ENCODE measurements at regions of chr4 and their contacts with region 1.

Region 1: GRCh38 chr4:37977471-37978247 is 17.5 kb downstream of the PTTG2 start:
- DNase-seq: peak; percentile 85
- H3K4me3 ChIP-seq: peak overlapping the region; percentile 96
- H3K27ac ChIP-seq: peak overlapping the region; percentile 99
- H3K4me1 ChIP-seq: peaks cover 62% of the 10 kb centered on the region
- CTCF ChIP-seq: peak; percentile 74

Region 2: GRCh38 chr4:37452952-37453280 is 524.7 kb before region 1 on chr4:
- CTCF ChIA-PET with region 1: no interaction called
- POLR2A ChIA-PET with region 1: no interaction called
- intact Hi-C with region 1: no loop called
- DNase-seq: peak; percentile 43
- H3K4me3 ChIP-seq: no peak overlapping the region
- H3K27ac ChIP-seq: no peak overlapping the region
- H3K4me1 ChIP-seq: no peaks in the 10 kb centered on the region
- CTCF ChIP-seq: peak; percentile 81

Region 3: DNA sequence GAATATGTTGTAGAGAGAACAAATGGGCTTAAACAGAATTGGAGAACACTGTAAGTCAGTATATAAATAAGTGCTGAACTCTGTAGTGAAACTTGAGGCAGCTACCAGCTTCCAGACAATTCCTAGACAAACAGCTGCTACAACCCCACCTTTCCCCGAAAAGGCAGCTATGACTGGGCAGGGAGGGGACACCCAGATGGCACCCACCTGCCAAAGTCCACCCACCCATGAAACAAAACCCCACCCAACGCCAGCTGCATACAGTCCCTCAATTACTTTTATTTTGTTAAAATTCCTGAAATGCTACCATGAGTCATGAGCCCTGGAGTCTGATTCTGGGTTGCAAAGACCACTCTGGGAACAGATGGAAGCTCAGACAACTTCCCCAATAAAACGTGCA is 315.9 kb before region 1 on chr4:
- CTCF ChIA-PET with region 1: no interaction called
- POLR2A ChIA-PET with region 1: no interaction called
- intact Hi-C with region 1: no loop called
- DNase-seq: no peak
- H3K4me3 ChIP-seq: no peak overlapping the region
- H3K27ac ChIP-seq: no peak overlapping the region
- H3K4me1 ChIP-seq: peaks cover 6% of the 10 kb centered on the region
- CTCF ChIP-seq: no peak

Region 4: GRCh38 chr4:37675587-37676290 is 301.9 kb before region 1 on chr4:
- CTCF ChIA-PET with region 1: no interaction called
- POLR2A ChIA-PET with region 1: no interaction called
- intact Hi-C with region 1: loop called (anchors 2 kb)
- DNase-seq: peak; percentile 95
- H3K4me3 ChIP-seq: peak overlapping the region; percentile 53
- H3K27ac ChIP-seq: peak overlapping the region; percentile 94
- H3K4me1 ChIP-seq: peaks cover 74% of the 10 kb centered on the region
- CTCF ChIP-seq: no peak

Region 5: DNA sequence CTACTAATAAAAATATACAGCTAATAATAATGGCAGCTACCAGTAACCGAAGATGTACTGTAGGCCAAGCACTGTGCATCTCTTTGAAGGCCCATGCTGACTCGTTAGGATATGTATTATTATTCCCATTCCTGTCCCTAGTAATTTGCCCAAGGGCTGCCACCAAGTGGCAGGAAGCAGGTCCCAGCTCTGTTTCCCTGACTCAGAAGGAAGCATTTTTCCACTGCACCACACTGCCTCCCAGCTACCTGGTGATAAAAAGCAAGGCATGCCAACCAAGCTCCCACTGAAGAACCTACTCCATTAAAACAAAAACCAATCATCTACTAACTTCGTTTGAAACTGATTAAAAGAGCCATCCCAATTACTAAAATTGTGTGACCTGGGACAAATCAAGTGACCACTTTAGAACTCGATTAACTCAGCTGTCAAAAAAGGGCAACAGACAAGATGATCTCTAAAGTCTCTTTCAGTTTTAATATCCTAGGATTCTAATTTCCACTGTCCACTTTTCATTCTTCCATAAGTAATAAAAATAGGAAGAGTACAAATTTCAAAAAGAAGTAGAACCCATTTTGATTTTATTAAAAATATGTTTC is 175.5 kb before region 1 on chr4:
- CTCF ChIA-PET with region 1: interaction called, 3 read pairs
- POLR2A ChIA-PET with region 1: interaction called, 17 read pairs
- intact Hi-C with region 1: loop called (anchors 1 kb)
- DNase-seq: peak; percentile 61
- H3K4me3 ChIP-seq: no peak overlapping the region
- H3K27ac ChIP-seq: no peak overlapping the region
- H3K4me1 ChIP-seq: peaks cover 24% of the 10 kb centered on the region
- CTCF ChIP-seq: peak; percentile 73

Region 6: GRCh38 chr4:37847311-37847884 is 130.3 kb before region 1 on chr4:
- CTCF ChIA-PET with region 1: interaction called, 6 read pairs
- POLR2A ChIA-PET with region 1: interaction called, 26 read pairs
- intact Hi-C with region 1: loop called (anchors 1 kb)
- DNase-seq: no peak
- H3K4me3 ChIP-seq: peak overlapping the region; percentile 36
- H3K27ac ChIP-seq: peak overlapping the region; percentile 93
- H3K4me1 ChIP-seq: peaks cover 76% of the 10 kb centered on the region
- CTCF ChIP-seq: no peak

Region 7: DNA sequence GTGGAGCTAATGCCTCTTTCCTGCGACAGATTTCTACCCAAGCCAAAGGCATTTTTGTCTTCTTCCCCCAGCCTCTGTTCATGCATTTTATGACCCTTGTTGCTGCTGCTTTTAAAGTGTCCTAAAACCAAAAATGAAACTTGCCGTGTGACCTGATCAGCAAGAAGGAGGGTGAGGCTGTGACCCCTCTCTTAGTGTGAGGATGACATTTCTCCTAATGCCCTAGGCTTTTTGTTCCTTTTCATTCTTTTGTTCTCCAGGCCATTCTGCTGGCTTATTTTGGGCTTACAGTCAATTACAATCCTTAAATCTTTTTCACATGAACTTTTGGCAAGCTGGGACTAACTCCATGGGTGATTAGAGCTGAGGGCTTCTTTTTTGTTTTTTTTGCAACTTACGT is 16.9 kb after region 1 on chr4:
- CTCF ChIA-PET with region 1: interaction called, 4 read pairs
- POLR2A ChIA-PET with region 1: interaction called, 105 read pairs
- intact Hi-C with region 1: loop called (anchors 1 kb)
- DNase-seq: peak; percentile 60
- H3K4me3 ChIP-seq: peak overlapping the region; percentile 61
- H3K27ac ChIP-seq: peak overlapping the region; percentile 75
- H3K4me1 ChIP-seq: peaks cover 98% of the 10 kb centered on the region
- CTCF ChIP-seq: no peak

Region 8: GRCh38 chr4:38034986-38035882 is 57.6 kb after region 1 on chr4:
- CTCF ChIA-PET with region 1: interaction called, 3 read pairs
- POLR2A ChIA-PET with region 1: interaction called, 4 read pairs
- intact Hi-C with region 1: loop called (anchors 1 kb)
- DNase-seq: peak; percentile 84
- H3K4me3 ChIP-seq: no peak overlapping the region
- H3K27ac ChIP-seq: peak overlapping the region; percentile 19
- H3K4me1 ChIP-seq: peaks cover 14% of the 10 kb centered on the region
- CTCF ChIP-seq: peak; percentile 97

Region 9: DNA sequence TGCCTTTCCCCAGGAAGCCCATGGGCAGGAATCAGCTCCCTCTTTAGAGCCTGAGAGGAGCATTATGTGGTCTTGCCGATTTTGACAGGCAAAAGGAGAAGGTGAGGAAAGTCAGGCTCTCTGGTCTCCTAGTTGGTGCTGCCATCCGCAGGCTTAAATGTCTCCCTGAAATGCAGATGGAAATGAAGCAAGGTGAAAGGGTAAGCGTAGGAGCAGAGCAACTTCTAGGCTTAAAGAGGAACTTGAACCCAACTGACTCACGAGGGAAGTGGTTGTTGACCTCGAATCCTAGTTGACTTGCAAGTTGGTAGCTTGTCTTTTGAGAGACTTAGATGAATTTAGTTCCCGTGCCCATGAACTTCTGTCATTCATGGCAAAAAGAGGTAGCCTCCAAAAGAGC is 188.4 kb after region 1 on chr4:
- CTCF ChIA-PET with region 1: no interaction called
- POLR2A ChIA-PET with region 1: no interaction called
- intact Hi-C with region 1: no loop called
- DNase-seq: peak; percentile 11
- H3K4me3 ChIP-seq: no peak overlapping the region
- H3K27ac ChIP-seq: no peak overlapping the region
- H3K4me1 ChIP-seq: no peaks in the 10 kb centered on the region
- CTCF ChIP-seq: 0 out of 2 replicates have a peak, but pooled peaks have one; percentile 27

Region 10: DNA sequence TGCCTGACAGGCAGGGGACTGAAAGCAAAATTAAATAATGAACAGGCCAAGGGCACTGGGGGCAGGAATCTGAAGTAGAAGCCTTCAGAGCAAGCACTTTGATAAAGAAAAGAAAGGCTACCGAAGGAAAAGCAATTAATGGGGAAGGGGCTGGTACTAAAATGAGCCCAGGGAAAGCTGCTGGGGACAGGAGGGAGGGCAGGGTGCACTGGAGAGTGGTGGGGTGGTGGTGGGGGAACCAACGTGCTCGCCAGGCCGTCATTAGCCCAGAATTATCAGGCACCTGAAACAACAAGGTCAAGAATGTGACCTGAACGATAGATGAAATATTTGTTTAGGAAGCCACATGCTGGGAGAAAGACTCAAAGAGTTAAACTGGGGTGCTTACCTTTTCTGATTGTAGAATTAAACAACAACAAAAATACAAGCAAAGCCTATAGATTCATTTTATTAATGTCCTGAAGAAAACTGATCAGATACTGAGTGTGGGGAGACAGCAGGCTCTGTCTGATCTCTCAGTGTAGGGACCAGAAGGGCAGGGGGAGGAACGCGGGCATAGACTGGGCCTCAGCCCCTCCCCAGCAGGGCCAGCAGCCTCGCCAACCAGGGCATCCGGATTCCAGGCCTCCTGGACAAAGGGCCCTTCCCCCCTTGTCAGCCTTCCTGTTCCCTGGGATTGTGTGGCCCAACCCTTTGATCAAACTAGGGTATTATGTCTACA is 446.7 kb after region 1 on chr4:
- CTCF ChIA-PET with region 1: no interaction called
- POLR2A ChIA-PET with region 1: no interaction called
- intact Hi-C with region 1: no loop called
- DNase-seq: no peak
- H3K4me3 ChIP-seq: no peak overlapping the region
- H3K27ac ChIP-seq: no peak overlapping the region
- H3K4me1 ChIP-seq: no peaks in the 10 kb centered on the region
- CTCF ChIP-seq: no peak

Region 11: GRCh38 chr4:39365830-39366771 is 1388.4 kb after region 1 on chr4 and contains the start of gene RFC1:
- CTCF ChIA-PET with region 1: no interaction called
- POLR2A ChIA-PET with region 1: no interaction called
- intact Hi-C with region 1: loop called (anchors 5 kb)
- DNase-seq: peak; percentile 95
- H3K4me3 ChIP-seq: peak within 1 kb of the TSS; percentile 86
- H3K27ac ChIP-seq: peak within 1 kb of the TSS; percentile 79
- H3K4me1 ChIP-seq: peaks cover 41% of the 10 kb centered on the region
- CTCF ChIP-seq: no peak
- total RNA-seq, gene RFC1: 72.7 and 91.0 TPM in 2 replicates